Naive thymus-derived CD4-positive, alpha-beta T cell (primary cell): ENCODE measurements at regions of chr6 and their contacts with region 1.

Region 1: GRCh38 chr6:11258260-11259237 is 26.1 kb upstream of the NEDD9 start:
- DNase-seq: peak in 5 of 9 donors; percentile 5 to 24 (median 12)
- ATAC-seq: peak; percentile 83
- H3K4me3 ChIP-seq: peak overlapping the region; percentile 11
- H3K4me3 Mint-ChIP-seq: peak overlapping the region in 8 of 10 donors; percentile 6 to 65 (median 28)
- H3K27ac ChIP-seq: peak overlapping the region; percentile 6
- H3K27ac Mint-ChIP-seq: peak overlapping the region in 8 of 9 donors; percentile 37 to 84 (median 68)
- H3K4me1 ChIP-seq: peaks cover 16 to 58% of the 10 kb centered on the region in 2 donors
- H3K4me1 Mint-ChIP-seq: peaks cover 32 to 59% (median 44%) of the 10 kb centered on the region in 7 donors
- H3K27me3 ChIP-seq: no peaks in the 10 kb centered on the region
- H3K27me3 Mint-ChIP-seq: no peaks in the 10 kb centered on the region

Region 2: GRCh38 chr6:11188161-11188915 is 70.2 kb before region 1 on chr6:
- CTCF ChIA-PET with region 1: no interaction called
- POLR2A ChIA-PET with region 1: no interaction called
- intact Hi-C with region 1: no loop called
- DNase-seq: no peak
- ATAC-seq: no peak
- H3K4me3 ChIP-seq: no peak overlapping the region
- H3K4me3 Mint-ChIP-seq: no peak overlapping the region
- H3K27ac ChIP-seq: no peak overlapping the region
- H3K27ac Mint-ChIP-seq: no peak overlapping the region
- H3K4me1 ChIP-seq: no peaks in the 10 kb centered on the region
- H3K4me1 Mint-ChIP-seq: peaks cover 0 to 1% (median 0%) of the 10 kb centered on the region in 7 donors
- H3K27me3 ChIP-seq: no peaks in the 10 kb centered on the region
- H3K27me3 Mint-ChIP-seq: no peaks in the 10 kb centered on the region

Region 3: GRCh38 chr6:11198663-11199603 is 59.6 kb before region 1 on chr6:
- CTCF ChIA-PET with region 1: no interaction called
- POLR2A ChIA-PET with region 1: no interaction called
- intact Hi-C with region 1: loop called in 1 of 2 experiments (anchors 2 kb)
- DNase-seq: peak in 8 of 9 donors; percentile 23 to 73 (median 58)
- ATAC-seq: peak; percentile 77
- H3K4me3 ChIP-seq: no peak overlapping the region
- H3K4me3 Mint-ChIP-seq: peak overlapping the region; percentile 19 to 61 (median 52)
- H3K27ac ChIP-seq: peak overlapping the region; percentile 6
- H3K27ac Mint-ChIP-seq: peak overlapping the region; percentile 57 to 90 (median 73)
- H3K4me1 ChIP-seq: peaks cover 11 to 44% of the 10 kb centered on the region in 2 donors
- H3K4me1 Mint-ChIP-seq: peaks cover 36 to 81% (median 62%) of the 10 kb centered on the region in 7 donors
- H3K27me3 ChIP-seq: no peaks in the 10 kb centered on the region
- H3K27me3 Mint-ChIP-seq: no peaks in the 10 kb centered on the region

Region 4: DNA sequence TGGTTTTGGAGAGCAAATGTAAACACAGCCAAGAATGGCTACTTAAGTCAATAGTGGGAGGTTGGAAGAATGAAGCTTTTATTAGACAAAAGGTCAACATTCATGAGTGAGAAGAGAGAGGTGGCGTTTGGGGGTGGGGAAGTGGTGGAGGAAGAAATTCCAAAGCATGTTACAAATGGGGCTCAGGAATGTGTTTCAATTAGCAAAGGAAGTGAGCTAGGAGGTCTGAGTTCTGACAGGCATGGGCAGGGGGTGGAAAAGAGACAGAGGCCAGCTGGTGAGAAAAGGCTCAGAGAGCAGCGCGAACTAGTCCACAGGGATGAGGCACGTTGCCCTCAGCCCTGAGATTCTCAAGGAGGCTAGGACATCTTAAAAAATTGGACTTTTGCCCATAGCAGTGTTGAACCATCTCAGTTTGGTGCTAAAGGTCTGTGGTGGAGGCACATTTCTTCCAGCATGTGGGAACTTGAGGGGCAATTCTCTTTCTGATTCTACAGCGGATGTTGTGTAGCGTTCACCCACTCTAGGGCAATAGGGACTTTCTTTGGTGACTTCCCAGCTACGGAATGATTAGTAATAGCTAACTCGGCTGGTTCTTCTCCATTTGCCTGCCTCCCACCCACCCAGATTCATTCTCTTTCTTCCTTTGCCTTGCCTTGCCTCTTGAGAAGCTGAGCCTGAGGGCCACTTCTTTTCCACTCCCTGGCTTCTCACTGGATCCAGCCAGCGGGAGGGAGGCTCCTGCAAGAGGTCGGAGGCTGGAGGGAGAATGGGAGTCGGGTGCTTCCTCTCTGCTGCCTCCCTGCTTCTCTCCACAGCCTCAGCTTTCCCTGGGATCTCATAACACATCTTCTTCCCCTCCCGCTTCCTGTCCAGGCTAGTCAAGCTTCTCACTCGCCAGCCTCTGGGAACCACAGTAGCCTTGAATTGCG is 19.0 kb after region 1 on chr6:
- CTCF ChIA-PET with region 1: interaction called, 3 read pairs
- POLR2A ChIA-PET with region 1: no interaction called
- intact Hi-C with region 1: loop called in 1 of 2 experiments (anchors 2 kb)
- DNase-seq: no peak
- ATAC-seq: peak; percentile 41
- H3K4me3 ChIP-seq: no peak overlapping the region
- H3K4me3 Mint-ChIP-seq: peak overlapping the region in 1 of 10 donors; percentile 49
- H3K27ac ChIP-seq: no peak overlapping the region
- H3K27ac Mint-ChIP-seq: peak overlapping the region in 4 of 9 donors; percentile 9 to 85 (median 27)
- H3K4me1 ChIP-seq: peaks cover 11 to 38% of the 10 kb centered on the region in 2 donors
- H3K4me1 Mint-ChIP-seq: peaks cover 30 to 56% (median 37%) of the 10 kb centered on the region in 7 donors
- H3K27me3 ChIP-seq: no peaks in the 10 kb centered on the region
- H3K27me3 Mint-ChIP-seq: no peaks in the 10 kb centered on the region